Activated CD4-positive, alpha-beta T cell treated with anti-CD3 and anti-CD28 coated beads, Interleukin-2, amount 10 ng/mL, durations not matched to agents 7 days and 5 days (primary cell): ENCODE measurements at regions of chr2 and their contacts with region 1.

Region 1: GRCh38 chr2:3558205-3559014 is at the start of gene RNASEH1:
- DNase-seq: peak; percentile 97
- H3K4me3 Mint-ChIP-seq: peak within 1 kb of the TSS; percentile 90
- H3K27ac Mint-ChIP-seq: peak within 1 kb of the TSS; percentile 98
- H3K4me1 Mint-ChIP-seq: peaks cover 50% of the 10 kb centered on the region
- H3K27me3 Mint-ChIP-seq: no peaks in the 10 kb centered on the region
- total RNA-seq, gene RNASEH1: 18.7 to 26.0 TPM

Region 2: GRCh38 chr2:3539836-3540235 is 18.6 kb before region 1 on chr2:
- CTCF ChIA-PET with region 1: no interaction called
- POLR2A ChIA-PET with region 1: interaction called, 12 read pairs
- DNase-seq: no peak
- H3K4me3 Mint-ChIP-seq: no peak overlapping the region
- H3K27ac Mint-ChIP-seq: no peak overlapping the region
- H3K4me1 Mint-ChIP-seq: peaks cover 10% of the 10 kb centered on the region
- H3K27me3 Mint-ChIP-seq: no peaks in the 10 kb centered on the region